Heart left ventricle (tissue), 16 donors: ENCODE measurements at regions of chr16 and their contacts with region 1.

Region 1: GRCh38 chr16:75064403-75065148 is 52.0 kb downstream of the LDHD start:
- DNase-seq: no peak
- ATAC-seq: no peak
- H3K4me3 ChIP-seq: peak overlapping the region in 1 of 12 donors; percentile 23
- H3K27ac ChIP-seq: peak overlapping the region in 2 of 12 donors; percentile 11 to 15
- H3K4me1 ChIP-seq: peaks cover 0 to 51% (median 24%) of the 10 kb centered on the region in 12 donors
- H3K27me3 ChIP-seq: no peaks in the 10 kb centered on the region
- CTCF ChIP-seq: no peak
- POLR2A ChIP-seq: no peak

Region 2: DNA sequence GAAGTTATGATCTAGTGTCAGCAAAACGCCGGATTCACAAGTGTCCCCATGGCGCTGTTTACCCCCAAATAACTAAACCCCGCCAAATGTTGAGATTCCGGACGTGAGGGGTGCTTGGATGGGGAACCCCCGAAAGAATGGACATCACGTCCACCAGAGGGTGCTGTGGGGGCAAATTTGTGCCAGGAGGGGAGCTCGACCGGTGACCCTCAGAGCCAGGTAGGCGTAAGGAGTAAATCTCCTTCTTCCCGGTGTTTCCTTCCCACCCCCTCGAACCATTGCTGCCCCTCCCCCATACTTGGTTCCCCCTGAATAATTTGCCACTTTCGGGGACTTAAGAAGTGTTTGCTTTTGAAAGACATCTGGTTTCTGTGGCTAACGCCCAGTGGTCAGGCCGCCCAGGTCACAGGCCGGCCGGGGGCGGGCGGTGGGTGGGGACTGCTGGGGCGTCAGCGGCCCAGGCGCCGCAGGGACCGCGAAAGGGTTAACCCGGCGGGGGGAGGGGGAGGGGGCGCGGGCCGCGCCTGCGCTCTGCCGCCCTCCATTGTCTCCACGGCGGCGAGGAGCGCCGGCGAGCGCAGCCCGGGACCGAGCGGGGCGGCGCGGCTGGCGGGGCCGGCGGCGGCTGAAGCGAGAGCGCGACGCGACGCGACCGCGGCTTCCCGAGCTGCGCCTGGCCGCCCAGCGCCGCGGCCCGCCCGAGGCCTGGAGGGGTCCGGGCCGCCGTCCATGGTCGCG is 65.9 kb before region 1 on chr16 and contains the start of gene ZNRF1:
- intact Hi-C with region 1: loop called in 1 of 10 experiments (anchors 10 kb)
- DNase-seq: peak; percentile 87 to 94 (median 89)
- ATAC-seq: peak; percentile 74 to 89 (median 87)
- H3K4me3 ChIP-seq: peak within 1 kb of the TSS; percentile 65 to 99 (median 94)
- H3K27ac ChIP-seq: peak within 1 kb of the TSS; percentile 16 to 93 (median 88)
- H3K4me1 ChIP-seq: peaks cover 3 to 49% (median 33%) of the 10 kb centered on the region in 12 donors
- H3K27me3 ChIP-seq: no peaks in the 10 kb centered on the region
- CTCF ChIP-seq: peak; percentile 63 to 87 (median 82)
- POLR2A ChIP-seq: no peak
- total RNA-seq, gene ZNRF1: 20.5 to 43.3 (median 23.9) TPM